ENCODE measurements at regions of chr9 and their contacts with region 1.

Region 1: DNA sequence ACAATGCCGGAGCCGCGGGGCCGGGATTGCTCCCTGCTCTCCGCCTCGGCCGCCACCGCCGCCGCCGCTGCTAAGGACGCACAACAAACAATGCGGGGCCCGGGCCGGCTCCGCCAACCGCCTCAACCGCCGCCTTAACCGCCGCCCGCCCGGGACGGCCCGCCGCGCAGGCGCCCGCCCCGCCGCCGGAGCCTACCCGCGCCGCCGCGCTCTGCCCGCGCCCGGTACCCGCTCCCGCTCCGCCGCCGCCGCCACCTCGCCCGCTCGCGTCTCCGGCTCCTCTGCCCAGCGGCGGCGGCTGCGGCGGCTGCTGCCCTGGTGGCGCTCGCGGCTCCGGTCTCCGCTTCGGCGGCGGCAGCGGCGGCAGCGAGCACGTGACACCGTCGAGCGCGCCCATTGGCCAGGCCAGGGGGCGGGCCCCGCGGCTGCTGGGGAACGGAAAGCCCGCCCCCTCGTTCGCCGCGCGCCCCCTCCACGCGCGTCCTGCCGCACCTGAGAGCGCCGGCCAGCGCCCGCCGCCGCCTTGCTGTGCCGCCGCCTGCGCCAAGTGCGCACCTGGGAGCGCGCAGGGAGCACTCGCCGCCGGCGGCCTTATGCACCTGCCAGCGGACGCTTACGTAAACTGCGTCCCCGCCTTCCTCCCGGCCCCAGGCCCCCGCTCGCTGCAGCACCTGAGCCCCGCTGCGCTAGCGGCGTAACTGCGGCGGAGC is at the start of gene STRBP:
- DNase-seq: peak; percentile 74 to 85 (median 84)
- H3K4me3 ChIP-seq: peak within 1 kb of the TSS; percentile 67 to 90 (median 72)
- H3K4me3 Mint-ChIP-seq: peak within 1 kb of the TSS; percentile 77 to 81
- H3K27ac ChIP-seq: no peak within 1 kb of the TSS
- H3K27ac Mint-ChIP-seq: peak within 1 kb of the TSS in 2 of 7 donors; percentile 26 to 74
- H3K4me1 ChIP-seq: peaks cover 14 to 16% of the 10 kb centered on the region in 2 donors
- H3K4me1 Mint-ChIP-seq: peaks cover 15% of the 10 kb centered on the region
- H3K27me3 ChIP-seq: peaks cover 0 to 18% of the 10 kb centered on the region in 2 donors
- H3K27me3 Mint-ChIP-seq: peaks cover 10 to 27% (median 18%) of the 10 kb centered on the region in 3 donors
- CTCF ChIP-seq: no peak
- polyA plus RNA-seq, gene STRBP: 0.97 to 1.9 (median 1.9) TPM

Region 2: DNA sequence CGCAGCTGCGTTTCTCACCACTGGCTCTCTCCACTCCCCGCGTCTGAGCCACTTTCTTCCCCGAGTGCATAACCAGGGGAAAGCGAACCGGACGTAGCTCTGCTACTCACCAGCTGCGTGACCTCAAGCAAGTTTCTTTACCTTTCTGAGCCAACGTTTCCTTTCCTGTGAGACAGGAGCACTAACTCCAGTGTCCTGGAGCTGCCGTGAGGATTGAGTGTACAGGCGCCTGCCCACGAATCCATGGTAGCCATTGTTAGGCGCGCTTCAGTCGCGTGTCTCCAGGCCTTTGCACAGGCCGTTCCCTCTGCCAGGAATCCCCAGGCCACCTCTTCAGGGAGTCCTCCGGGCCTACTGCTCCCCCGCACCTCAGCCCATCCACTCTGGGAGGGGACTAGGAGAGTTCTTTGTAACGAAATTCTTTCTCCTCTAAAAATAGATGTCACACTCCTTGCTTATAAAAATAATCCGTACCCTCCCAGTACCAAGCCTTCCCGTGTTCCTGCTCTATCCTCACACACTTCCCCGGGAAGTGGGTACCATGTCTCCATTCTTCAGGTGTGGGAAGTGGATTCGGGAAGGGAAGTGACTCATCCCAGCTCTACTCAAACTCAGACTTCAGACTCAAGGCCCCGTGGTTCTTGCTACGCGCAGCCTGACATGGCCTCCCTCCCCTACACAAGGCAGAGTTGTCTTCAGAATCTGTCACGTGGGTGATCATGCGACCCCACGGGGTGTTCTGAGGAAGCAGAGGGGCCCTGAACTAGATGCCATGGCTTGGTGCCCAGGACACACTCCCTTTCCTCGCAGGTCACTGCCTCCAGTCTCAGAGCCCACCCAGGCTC is 71.5 kb after region 1 on chr9:
- intact Hi-C with region 1: loop called (anchors 5 to 10 kb)
- DNase-seq: peak; percentile 32 to 71 (median 32)
- H3K4me3 ChIP-seq: peak overlapping the region in 2 of 3 experiments; percentile 27 to 70
- H3K4me3 Mint-ChIP-seq: peak overlapping the region; percentile 80 to 93
- H3K27ac ChIP-seq: peak overlapping the region in 1 of 2 donors; percentile 17
- H3K27ac Mint-ChIP-seq: peak overlapping the region in 6 of 7 donors; percentile 63 to 90 (median 82)
- H3K4me1 ChIP-seq: peaks cover 19 to 22% of the 10 kb centered on the region in 2 donors
- H3K4me1 Mint-ChIP-seq: peaks cover 26% of the 10 kb centered on the region
- H3K27me3 ChIP-seq: peaks cover 0 to 15% of the 10 kb centered on the region in 2 donors
- H3K27me3 Mint-ChIP-seq: peaks cover 17 to 24% (median 20%) of the 10 kb centered on the region in 3 donors
- CTCF ChIP-seq: no peak